ENCODE measurements at regions of chr11 and their contacts with region 1.

Region 1: DNA sequence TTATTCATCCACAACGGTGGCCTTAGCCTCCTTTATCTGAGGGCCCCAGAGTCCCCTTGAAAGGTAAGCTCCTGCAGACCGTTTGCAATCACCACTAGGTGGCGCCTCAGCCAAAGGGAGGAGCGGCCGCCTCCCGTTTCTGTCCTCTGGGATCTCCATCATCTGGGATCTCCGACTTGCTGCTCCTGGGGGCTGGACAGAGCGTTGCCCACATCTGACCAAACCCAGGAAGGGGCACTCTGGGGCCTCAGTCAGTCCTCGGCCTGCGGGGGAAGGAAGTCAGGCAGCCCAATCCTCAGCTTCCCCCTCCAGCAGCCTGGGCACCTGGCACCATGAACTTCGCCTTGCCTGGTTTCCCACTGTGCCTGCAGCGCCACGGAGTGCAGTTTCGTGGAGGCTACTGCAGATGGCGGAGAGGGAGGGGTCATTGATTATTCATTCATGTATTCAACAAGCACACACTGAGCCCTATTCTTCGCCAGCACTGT is 23.5 kb downstream of the TP53I11 start:
- DNase-seq: peak; percentile 79 to 84
- ATAC-seq: peak; percentile 86 to 93
- H3K4me3 ChIP-seq: no peak overlapping the region
- H3K27ac ChIP-seq: no peak overlapping the region
- H3K4me1 ChIP-seq: no peaks in the 10 kb centered on the region
- CTCF ChIP-seq: peak; percentile 91
- EP300 ChIP-seq: no peak
- POLR2A ChIP-seq: no peak
- RAD21 ChIP-seq: peak; percentile 83 to 89

Region 2: GRCh38 chr11:44916801-44917385 is 10.3 kb before region 1 on chr11:
- CTCF ChIA-PET with region 1: interaction called, 62 read pairs
- POLR2A ChIA-PET with region 1: no interaction called
- DNase-seq: no peak
- ATAC-seq: no peak; a peak in 2 of 6 replicates
- H3K4me3 ChIP-seq: no peak overlapping the region
- H3K27ac ChIP-seq: no peak overlapping the region
- H3K4me1 ChIP-seq: no peaks in the 10 kb centered on the region
- CTCF ChIP-seq: no peak
- EP300 ChIP-seq: no peak
- POLR2A ChIP-seq: no peak
- RAD21 ChIP-seq: no peak

Region 3: DNA sequence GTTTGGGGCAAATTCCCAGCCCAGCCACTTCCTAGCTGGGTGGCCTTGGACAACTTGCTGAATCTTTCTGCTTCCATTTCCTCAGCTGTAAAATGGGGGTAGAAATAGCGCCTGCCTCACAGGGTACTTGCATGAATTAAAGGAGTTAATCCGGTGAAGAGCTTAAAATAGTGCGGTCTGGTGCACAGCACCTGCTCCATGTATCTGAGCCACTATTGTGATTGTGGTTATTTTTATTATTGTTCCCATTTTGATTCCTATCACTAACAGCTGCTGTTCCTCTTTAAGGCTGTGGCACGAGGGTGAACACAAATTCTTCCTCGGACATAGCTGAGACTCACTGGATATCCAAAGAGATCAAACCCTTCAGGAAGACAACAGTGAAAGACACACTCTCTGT is 70.3 kb after region 1 on chr11:
- CTCF ChIA-PET with region 1: interaction called, 14 read pairs
- POLR2A ChIA-PET with region 1: no interaction called
- DNase-seq: no peak
- ATAC-seq: no peak
- H3K4me3 ChIP-seq: no peak overlapping the region
- H3K27ac ChIP-seq: no peak overlapping the region
- H3K4me1 ChIP-seq: no peaks in the 10 kb centered on the region
- CTCF ChIP-seq: no peak
- EP300 ChIP-seq: no peak
- POLR2A ChIP-seq: no peak
- RAD21 ChIP-seq: no peak

Measured in A549 (cell line).